Activated CD4-positive, alpha-beta memory T cell treated with anti-CD3 and anti-CD28 coated beads for 36 hours (primary cell): ENCODE measurements at regions of chr2 and their contacts with region 1.

Region 1: GRCh38 chr2:217223222-217223930 is 363.5 kb upstream of the TNP1 start:
- DNase-seq: peak; percentile 77
- H3K4me3 Mint-ChIP-seq: no peak overlapping the region
- H3K27ac Mint-ChIP-seq: peak overlapping the region; percentile 62
- H3K4me1 Mint-ChIP-seq: peaks cover 19% of the 10 kb centered on the region
- H3K27me3 Mint-ChIP-seq: peaks cover 9% of the 10 kb centered on the region

Region 2: DNA sequence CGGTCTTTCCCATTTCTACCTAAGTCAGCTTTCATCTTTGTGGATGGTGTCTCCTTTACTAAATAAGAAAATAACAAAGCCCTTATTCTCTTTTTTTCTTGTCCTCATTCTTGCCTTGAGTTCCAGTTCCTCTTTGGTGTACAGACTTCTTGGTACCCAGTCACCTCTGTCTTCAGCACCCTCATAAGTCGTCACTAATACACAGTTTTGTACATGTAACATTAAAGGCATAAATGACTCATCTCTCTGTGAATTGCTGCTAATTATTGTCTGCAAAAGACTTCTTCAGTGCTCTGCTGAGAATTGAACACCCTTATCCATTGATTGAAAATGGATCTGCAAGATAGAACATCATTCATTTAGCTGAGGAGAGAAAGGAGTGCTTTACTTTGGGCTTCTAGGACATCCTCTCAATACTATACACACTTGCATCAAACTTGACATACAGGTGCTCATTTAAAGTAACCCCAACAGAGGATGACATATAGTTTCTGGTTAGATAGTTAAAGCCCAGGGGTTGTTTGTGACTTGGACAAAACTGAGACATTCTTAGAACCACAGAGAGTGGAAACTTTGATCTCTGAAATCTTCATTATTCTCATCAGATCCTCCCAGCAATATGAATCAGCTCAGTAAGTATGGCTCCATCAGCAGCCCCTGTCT is 1017.2 kb before region 1 on chr2:
- CTCF ChIA-PET with region 1: no interaction called
- POLR2A ChIA-PET with region 1: no interaction called
- intact Hi-C with region 1: loop called (anchors 5 kb)
- DNase-seq: no peak
- H3K4me3 Mint-ChIP-seq: peak overlapping the region; percentile 9
- H3K27ac Mint-ChIP-seq: peak overlapping the region; percentile 92
- H3K4me1 Mint-ChIP-seq: peaks cover 63% of the 10 kb centered on the region
- H3K27me3 Mint-ChIP-seq: no peaks in the 10 kb centered on the region

Region 3: DNA sequence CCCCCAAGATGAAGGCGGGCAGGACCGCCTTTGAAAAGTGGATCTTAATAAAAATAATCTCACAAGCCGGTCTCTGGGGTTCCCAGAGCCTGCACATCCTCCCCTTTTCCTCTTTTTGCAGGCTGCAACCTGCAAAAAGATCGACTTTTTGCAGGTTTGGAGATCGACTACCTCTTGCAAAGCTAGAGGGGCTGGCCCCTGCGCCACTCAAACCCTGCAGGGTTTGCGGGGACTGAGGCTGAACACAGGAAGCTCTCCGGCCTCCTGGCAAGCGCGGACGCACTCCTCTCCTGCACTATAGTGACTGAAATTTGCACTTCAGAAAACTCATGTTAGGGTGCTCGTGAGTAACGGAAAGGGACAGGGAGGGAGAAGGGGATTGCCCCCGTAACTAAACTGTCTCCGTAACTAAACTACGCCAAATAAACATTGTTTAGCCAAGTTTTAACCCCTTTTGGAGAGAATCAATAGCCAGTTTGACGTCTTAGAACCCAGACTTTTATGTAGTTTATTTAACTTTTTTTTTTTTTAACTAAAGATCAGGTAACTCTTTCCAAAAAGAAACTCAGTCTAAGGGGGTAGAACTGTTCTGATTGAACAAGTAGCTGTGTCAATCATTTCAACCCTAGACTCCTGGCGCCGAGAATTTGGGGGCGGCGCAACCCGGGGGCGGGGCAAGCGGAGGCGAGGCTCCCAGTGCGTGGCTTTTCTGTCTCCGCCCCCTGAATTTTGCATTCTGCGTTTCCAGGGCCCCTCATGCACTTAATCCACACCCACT is 530.6 kb before region 1 on chr2:
- CTCF ChIA-PET with region 1: no interaction called
- POLR2A ChIA-PET with region 1: no interaction called
- intact Hi-C with region 1: loop called (anchors 1 kb)
- DNase-seq: peak; percentile 69
- H3K4me3 Mint-ChIP-seq: peak overlapping the region; percentile 63
- H3K27ac Mint-ChIP-seq: no peak overlapping the region
- H3K4me1 Mint-ChIP-seq: peaks cover 25% of the 10 kb centered on the region
- H3K27me3 Mint-ChIP-seq: peaks cover 56% of the 10 kb centered on the region

Region 4: GRCh38 chr2:216857131-216857550 is 366.2 kb before region 1 on chr2:
- CTCF ChIA-PET with region 1: no interaction called
- POLR2A ChIA-PET with region 1: no interaction called
- intact Hi-C with region 1: loop called (anchors 5 kb)
- DNase-seq: peak; percentile 20
- H3K4me3 Mint-ChIP-seq: no peak overlapping the region
- H3K27ac Mint-ChIP-seq: no peak overlapping the region
- H3K4me1 Mint-ChIP-seq: peaks cover 11% of the 10 kb centered on the region
- H3K27me3 Mint-ChIP-seq: peaks cover 2% of the 10 kb centered on the region

Region 5: DNA sequence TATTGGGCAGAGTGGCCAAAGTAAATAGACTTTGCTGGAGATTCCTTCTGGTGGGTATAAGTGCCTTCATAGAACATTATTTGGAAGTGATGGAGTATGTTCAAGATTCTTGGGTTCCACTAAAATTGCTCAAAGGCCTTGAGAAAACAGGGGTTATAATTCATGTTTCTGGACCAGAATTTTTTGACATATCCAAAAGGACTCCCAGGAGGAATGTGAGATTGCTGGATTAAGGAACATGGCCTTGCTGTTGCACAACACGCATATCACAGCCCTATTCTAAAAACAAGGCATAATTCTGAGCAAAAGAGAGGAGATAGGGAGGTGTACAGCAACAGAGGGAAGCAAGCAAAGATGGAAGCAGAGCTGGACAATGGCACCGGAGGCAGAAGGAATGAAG is 251.8 kb before region 1 on chr2:
- CTCF ChIA-PET with region 1: no interaction called
- POLR2A ChIA-PET with region 1: no interaction called
- intact Hi-C with region 1: no loop called
- DNase-seq: no peak
- H3K4me3 Mint-ChIP-seq: no peak overlapping the region
- H3K27ac Mint-ChIP-seq: no peak overlapping the region
- H3K4me1 Mint-ChIP-seq: no peaks in the 10 kb centered on the region
- H3K27me3 Mint-ChIP-seq: peaks cover 2% of the 10 kb centered on the region

Region 6: GRCh38 chr2:217090024-217090473 is 133.3 kb before region 1 on chr2:
- CTCF ChIA-PET with region 1: no interaction called
- POLR2A ChIA-PET with region 1: no interaction called
- intact Hi-C with region 1: loop called (anchors 1 kb)
- DNase-seq: no peak
- H3K4me3 Mint-ChIP-seq: no peak overlapping the region
- H3K27ac Mint-ChIP-seq: no peak overlapping the region
- H3K4me1 Mint-ChIP-seq: peaks cover 10% of the 10 kb centered on the region
- H3K27me3 Mint-ChIP-seq: peaks cover 14% of the 10 kb centered on the region

Region 7: GRCh38 chr2:217127744-217128143 is 95.6 kb before region 1 on chr2:
- CTCF ChIA-PET with region 1: no interaction called
- POLR2A ChIA-PET with region 1: no interaction called
- intact Hi-C with region 1: no loop called
- DNase-seq: no peak
- H3K4me3 Mint-ChIP-seq: no peak overlapping the region
- H3K27ac Mint-ChIP-seq: no peak overlapping the region
- H3K4me1 Mint-ChIP-seq: no peaks in the 10 kb centered on the region
- H3K27me3 Mint-ChIP-seq: no peaks in the 10 kb centered on the region

Region 8: GRCh38 chr2:217166241-217166850 is 57.0 kb before region 1 on chr2:
- CTCF ChIA-PET with region 1: no interaction called
- POLR2A ChIA-PET with region 1: no interaction called
- intact Hi-C with region 1: loop called (anchors 5 kb)
- DNase-seq: no peak
- H3K4me3 Mint-ChIP-seq: no peak overlapping the region
- H3K27ac Mint-ChIP-seq: no peak overlapping the region
- H3K4me1 Mint-ChIP-seq: peaks cover 8% of the 10 kb centered on the region
- H3K27me3 Mint-ChIP-seq: peaks cover 13% of the 10 kb centered on the region

Region 9: GRCh38 chr2:217610401-217611075 is 387.2 kb after region 1 on chr2:
- CTCF ChIA-PET with region 1: no interaction called
- POLR2A ChIA-PET with region 1: no interaction called
- intact Hi-C with region 1: loop called (anchors 1 kb)
- DNase-seq: peak; percentile 86
- H3K4me3 Mint-ChIP-seq: peak overlapping the region; percentile 42
- H3K27ac Mint-ChIP-seq: peak overlapping the region; percentile 96
- H3K4me1 Mint-ChIP-seq: peaks cover 50% of the 10 kb centered on the region
- H3K27me3 Mint-ChIP-seq: no peaks in the 10 kb centered on the region